Activated T-helper 2 cell treated with anti-CD3 and anti-CD28 coated beads, Interferon-gamma antibody, Interleukin-2, Interleukin-4, amounts not matched to agents 10 μg/mL and 5 μg/mL and 100 μg/mL, durations not matched to agents 14 hours and 24 hours and 36 hours (primary cell): ENCODE measurements at regions of chr9 and their contacts with region 1.

Region 1: DNA sequence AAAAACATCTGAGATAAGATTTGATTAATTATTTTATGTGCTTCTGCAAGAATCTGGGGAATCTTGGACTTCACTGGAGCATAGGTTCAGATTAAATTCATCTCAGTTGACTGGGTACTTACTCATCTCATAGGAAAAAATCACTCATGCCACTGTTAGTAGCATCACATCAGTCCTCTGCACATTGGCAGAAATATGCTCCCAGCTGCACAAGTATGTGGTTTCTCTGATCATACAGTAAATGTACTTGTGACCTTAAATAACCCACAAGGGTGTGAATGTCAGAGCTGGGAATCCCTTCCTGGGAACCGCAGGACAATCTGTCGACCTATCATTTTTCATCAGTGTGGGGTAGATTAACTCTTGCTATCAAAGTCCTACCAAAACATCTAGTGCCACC is 203.7 kb upstream of the SLC24A2 start:
- DNase-seq: no peak
- H3K4me3 Mint-ChIP-seq: no peak overlapping the region
- H3K27ac Mint-ChIP-seq: peak overlapping the region; percentile 3
- H3K4me1 Mint-ChIP-seq: peaks cover 52% of the 10 kb centered on the region
- H3K27me3 Mint-ChIP-seq: no peaks in the 10 kb centered on the region

Region 2: GRCh38 chr9:19665146-19665863 is 327.3 kb before region 1 on chr9:
- intact Hi-C with region 1: no loop called
- DNase-seq: no peak
- H3K4me3 Mint-ChIP-seq: no peak overlapping the region
- H3K27ac Mint-ChIP-seq: peak overlapping the region; percentile 43
- H3K4me1 Mint-ChIP-seq: peaks cover 12% of the 10 kb centered on the region
- H3K27me3 Mint-ChIP-seq: peaks cover 14% of the 10 kb centered on the region

Region 3: DNA sequence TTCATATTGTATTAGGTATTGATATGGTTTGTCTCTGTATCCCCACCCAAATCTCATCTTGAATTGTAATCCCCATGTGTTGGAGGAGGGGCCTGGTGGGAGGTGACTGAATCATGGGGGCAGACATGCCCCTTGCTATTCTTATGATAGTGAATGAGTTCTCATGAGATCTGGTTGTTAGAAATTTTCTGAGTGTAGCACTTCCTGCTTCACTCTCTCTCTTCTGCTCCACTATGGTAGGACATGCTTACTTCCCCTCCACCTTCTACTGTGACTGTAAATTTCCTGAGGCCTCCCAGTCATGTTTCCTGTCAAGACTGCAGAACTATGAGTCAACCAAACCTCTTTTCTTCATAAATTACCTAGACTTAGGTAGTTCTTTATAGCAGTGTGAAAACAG is 16.3 kb before region 1 on chr9:
- intact Hi-C with region 1: loop called (anchors 1 kb)
- DNase-seq: no peak
- H3K4me3 Mint-ChIP-seq: no peak overlapping the region
- H3K27ac Mint-ChIP-seq: peak overlapping the region; percentile 83
- H3K4me1 Mint-ChIP-seq: peaks cover 28% of the 10 kb centered on the region
- H3K27me3 Mint-ChIP-seq: no peaks in the 10 kb centered on the region

Region 4: GRCh38 chr9:20032413-20033006 is 40.0 kb after region 1 on chr9:
- intact Hi-C with region 1: no loop called
- DNase-seq: no peak
- H3K4me3 Mint-ChIP-seq: no peak overlapping the region
- H3K27ac Mint-ChIP-seq: no peak overlapping the region
- H3K4me1 Mint-ChIP-seq: no peaks in the 10 kb centered on the region
- H3K27me3 Mint-ChIP-seq: peaks cover 5% of the 10 kb centered on the region

Region 5: DNA sequence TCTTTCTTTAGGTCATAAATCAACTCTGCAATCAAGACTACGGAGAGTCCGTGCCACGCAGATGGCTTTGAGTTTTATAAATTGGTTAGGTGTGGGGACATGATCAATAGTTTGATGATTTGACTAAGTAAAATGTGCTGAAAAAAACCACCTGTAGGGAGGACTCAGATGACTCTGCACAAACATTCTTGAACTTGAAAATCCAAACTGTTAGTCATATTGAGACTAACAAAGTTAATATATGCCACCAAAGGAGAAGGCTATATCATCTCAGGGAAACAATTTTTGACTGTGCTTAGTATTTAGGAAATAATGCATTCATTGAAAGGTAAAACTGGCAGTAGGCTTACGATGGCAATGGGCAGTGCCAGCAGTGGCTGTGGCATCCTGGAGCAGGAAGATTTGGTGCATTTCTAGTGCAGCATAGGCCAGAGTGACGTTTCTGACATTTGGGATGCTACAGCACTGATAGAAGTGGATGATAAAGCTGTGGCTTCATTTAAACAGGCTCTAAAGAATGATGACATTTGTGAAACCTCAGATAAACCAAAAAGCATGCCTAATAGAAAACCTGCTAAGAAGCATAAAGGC is 338.6 kb after region 1 on chr9:
- intact Hi-C with region 1: loop called (anchors 1 kb)
- DNase-seq: no peak
- H3K4me3 Mint-ChIP-seq: no peak overlapping the region
- H3K27ac Mint-ChIP-seq: peak overlapping the region; percentile 21
- H3K4me1 Mint-ChIP-seq: peaks cover 31% of the 10 kb centered on the region
- H3K27me3 Mint-ChIP-seq: peaks cover 6% of the 10 kb centered on the region